H1 (cell line): ENCODE measurements at regions of chr3 and their contacts with region 1.

Region 1: GRCh38 chr3:81490541-81491288 is 270.7 kb downstream of the GBE1 start:
- DNase-seq: peak; percentile 21 to 87
- H3K4me3 ChIP-seq: no peak overlapping the region
- H3K27ac ChIP-seq: no peak overlapping the region
- H3K4me1 ChIP-seq: no peaks in the 10 kb centered on the region
- H3K27me3 ChIP-seq: no peaks in the 10 kb centered on the region
- CTCF ChIP-seq: peak in 2 of 3 experiments; percentile 70 to 86; a peak in 3 of 4 replicates
- EP300 ChIP-seq: no peak
- POLR2A ChIP-seq: no peak
- RAD21 ChIP-seq: peak; percentile 86 to 91

Region 2: GRCh38 chr3:81476692-81477091 is 14.0 kb before region 1 on chr3:
- CTCF ChIA-PET with region 1: interaction called, 18 read pairs
- POLR2A ChIA-PET with region 1: no interaction called
- DNase-seq: no peak
- H3K4me3 ChIP-seq: no peak overlapping the region
- H3K27ac ChIP-seq: no peak overlapping the region
- H3K4me1 ChIP-seq: peaks cover 0 to 3% (median 0%) of the 10 kb centered on the region in 4 experiments; a peak in 2 of 7 replicates
- H3K27me3 ChIP-seq: no peaks in the 10 kb centered on the region
- CTCF ChIP-seq: no peak
- EP300 ChIP-seq: no peak
- POLR2A ChIP-seq: no peak
- RAD21 ChIP-seq: no peak

Region 3: DNA sequence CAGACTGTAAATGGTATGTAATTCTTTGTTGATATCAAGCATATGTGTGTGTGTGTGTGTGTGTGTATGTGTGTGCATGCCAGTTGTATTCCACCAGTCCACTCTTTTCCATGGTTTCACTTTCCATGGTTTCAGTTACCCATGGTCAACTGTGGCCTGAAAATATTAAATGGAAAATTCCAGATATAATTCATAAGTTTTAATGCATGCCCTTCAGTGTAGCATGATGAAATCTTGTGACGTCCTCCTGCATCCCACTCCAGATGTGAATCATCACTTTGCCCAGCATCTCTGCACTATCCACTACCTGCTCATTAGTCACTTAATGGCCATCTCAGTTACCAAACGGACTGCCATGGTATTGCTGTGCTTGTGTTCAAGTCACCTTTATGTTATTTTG is 54.9 kb after region 1 on chr3:
- CTCF ChIA-PET with region 1: no interaction called
- POLR2A ChIA-PET with region 1: no interaction called
- DNase-seq: no peak
- H3K4me3 ChIP-seq: no peak overlapping the region
- H3K27ac ChIP-seq: no peak overlapping the region
- H3K4me1 ChIP-seq: no peaks in the 10 kb centered on the region
- H3K27me3 ChIP-seq: no peaks in the 10 kb centered on the region
- CTCF ChIP-seq: no peak
- EP300 ChIP-seq: no peak
- POLR2A ChIP-seq: no peak
- RAD21 ChIP-seq: no peak

Region 4: DNA sequence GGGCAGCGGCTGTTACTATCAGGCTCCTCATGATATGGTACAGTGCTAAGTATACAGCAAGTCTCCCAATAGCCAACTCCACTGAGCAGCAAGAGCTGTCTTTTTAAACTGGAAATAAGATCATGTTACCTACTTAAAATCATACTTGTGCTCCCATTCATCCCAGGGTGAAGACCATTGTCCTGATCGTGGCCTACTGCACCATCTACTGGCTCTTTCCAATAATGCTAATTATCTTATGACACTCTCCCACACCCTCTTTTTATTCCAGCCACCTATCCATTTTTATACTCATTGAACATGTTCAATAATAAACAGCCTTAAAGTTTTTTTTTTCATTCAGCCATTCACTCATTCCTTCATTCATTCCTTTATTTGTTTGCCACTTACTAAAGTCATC is 153.0 kb after region 1 on chr3:
- CTCF ChIA-PET with region 1: interaction called, 46 read pairs
- POLR2A ChIA-PET with region 1: no interaction called
- DNase-seq: no peak
- H3K4me3 ChIP-seq: no peak overlapping the region
- H3K27ac ChIP-seq: no peak overlapping the region
- H3K4me1 ChIP-seq: no peaks in the 10 kb centered on the region
- H3K27me3 ChIP-seq: no peaks in the 10 kb centered on the region
- CTCF ChIP-seq: peak in 2 of 3 experiments; percentile 47 to 53; a peak in 2 of 4 replicates
- EP300 ChIP-seq: no peak
- POLR2A ChIP-seq: no peak
- RAD21 ChIP-seq: peak; percentile 81 to 84